Activated T-helper 1 cell treated with anti-CD3 and anti-CD28 coated beads, Interleukin-12 subunit alpha, Interleukin-12 subunit beta, Interleukin-2, Interleukin-4 antibody, amounts not matched to agents 30 ng/mL and 10 ng/mL and 1 ng/mL, durations not matched to agents 14 hours and 24 hours and 36 hours (primary cell): ENCODE measurements at regions of chr1 and their contacts with region 1.

Region 1: GRCh38 chr1:202810615-202811295 is at the start of gene PCAT6:
- DNase-seq: peak; percentile 88
- H3K4me3 Mint-ChIP-seq: peak within 1 kb of the TSS; percentile 96
- H3K27ac Mint-ChIP-seq: peak within 1 kb of the TSS; percentile 96
- H3K4me1 Mint-ChIP-seq: peaks cover 55% of the 10 kb centered on the region
- H3K27me3 Mint-ChIP-seq: peaks cover 9% of the 10 kb centered on the region
- total RNA-seq, gene PCAT6: 1.1 and 1.7 TPM in 2 replicates

Region 2: DNA sequence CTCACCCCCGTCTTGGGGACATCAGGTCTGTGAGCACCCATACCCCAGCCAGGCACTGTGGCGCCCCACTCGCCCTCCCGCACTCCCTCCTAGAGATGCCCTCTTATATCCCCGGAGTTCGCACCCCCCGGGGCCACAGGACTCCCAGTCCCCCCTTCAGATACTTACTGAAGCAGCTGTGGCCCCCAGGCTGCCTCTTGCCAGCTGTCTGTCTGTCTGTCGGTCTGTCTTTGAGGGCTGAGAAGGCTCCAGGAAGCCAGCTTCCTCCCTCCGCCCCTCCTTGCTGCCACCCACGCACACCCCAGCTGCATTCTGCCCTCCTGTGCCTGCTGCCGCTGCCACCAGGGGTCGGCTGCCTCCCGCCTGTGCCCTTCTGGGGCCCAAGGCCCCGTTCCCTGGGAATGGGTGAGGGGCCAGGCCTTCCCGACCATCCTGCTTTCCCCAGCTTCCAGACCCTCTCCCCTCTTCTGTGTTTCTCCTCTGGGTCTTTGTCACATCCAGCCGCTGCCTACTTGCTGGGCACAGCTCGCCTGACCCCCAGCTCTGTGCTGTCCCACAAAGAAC is 650.3 kb before region 1 on chr1 and contains the start of gene PTPN7:
- intact Hi-C with region 1: loop called (anchors 5 kb)
- DNase-seq: peak; percentile 59
- H3K4me3 Mint-ChIP-seq: peak within 1 kb of the TSS; percentile 98
- H3K27ac Mint-ChIP-seq: peak within 1 kb of the TSS; percentile 94
- H3K4me1 Mint-ChIP-seq: peaks cover 77% of the 10 kb centered on the region
- H3K27me3 Mint-ChIP-seq: no peaks in the 10 kb centered on the region
- total RNA-seq, gene PTPN7: 584 and 597 TPM in 2 replicates

Region 3: DNA sequence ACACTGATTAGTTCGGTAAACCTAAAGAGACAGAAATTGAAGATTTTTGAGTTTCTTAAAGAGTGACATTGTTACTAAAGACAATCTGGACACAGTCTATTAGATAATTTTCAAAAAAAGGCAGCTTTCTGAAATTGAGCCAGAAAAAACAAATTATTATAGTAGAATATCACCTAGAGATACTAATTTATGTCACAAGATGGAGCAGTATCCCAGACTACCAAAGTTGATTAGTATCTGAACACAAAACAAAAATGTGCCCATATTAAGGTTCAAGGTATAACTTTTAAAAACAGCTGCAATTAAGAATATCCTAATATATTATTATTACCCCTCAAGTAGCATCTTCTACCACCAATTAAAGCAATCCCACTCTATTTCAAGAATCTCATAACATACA is 60.0 kb before region 1 on chr1:
- intact Hi-C with region 1: no loop called
- DNase-seq: no peak
- H3K4me3 Mint-ChIP-seq: no peak overlapping the region
- H3K27ac Mint-ChIP-seq: no peak overlapping the region
- H3K4me1 Mint-ChIP-seq: no peaks in the 10 kb centered on the region
- H3K27me3 Mint-ChIP-seq: no peaks in the 10 kb centered on the region

Region 4: GRCh38 chr1:202835548-202836090 is 24.9 kb after region 1 on chr1:
- intact Hi-C with region 1: loop called (anchors 2 kb)
- DNase-seq: peak; percentile 53
- H3K4me3 Mint-ChIP-seq: peak overlapping the region; percentile 63
- H3K27ac Mint-ChIP-seq: peak overlapping the region; percentile 82
- H3K4me1 Mint-ChIP-seq: peaks cover 71% of the 10 kb centered on the region
- H3K27me3 Mint-ChIP-seq: no peaks in the 10 kb centered on the region

Region 5: GRCh38 chr1:202861420-202862200 is 50.9 kb after region 1 on chr1:
- intact Hi-C with region 1: loop called (anchors 1 kb)
- DNase-seq: peak; percentile 60
- H3K4me3 Mint-ChIP-seq: peak overlapping the region; percentile 87
- H3K27ac Mint-ChIP-seq: no peak overlapping the region
- H3K4me1 Mint-ChIP-seq: peaks cover 21% of the 10 kb centered on the region
- H3K27me3 Mint-ChIP-seq: peaks cover 65% of the 10 kb centered on the region

Region 6: GRCh38 chr1:202926720-202927491 is 116.2 kb after region 1 on chr1 and contains the start of gene KLHL12:
- intact Hi-C with region 1: loop called (anchors 1 kb)
- DNase-seq: peak; percentile 92
- H3K4me3 Mint-ChIP-seq: peak within 1 kb of the TSS; percentile 97
- H3K27ac Mint-ChIP-seq: peak within 1 kb of the TSS; percentile 95
- H3K4me1 Mint-ChIP-seq: peaks cover 34% of the 10 kb centered on the region
- H3K27me3 Mint-ChIP-seq: peaks cover 3% of the 10 kb centered on the region
- total RNA-seq, gene KLHL12: 24.9 and 25.5 TPM in 2 replicates

Region 7: GRCh38 chr1:203006948-203007871 is 196.5 kb after region 1 on chr1 and contains the start of gene TMEM183A:
- intact Hi-C with region 1: loop called (anchors 2 kb)
- DNase-seq: peak; percentile 95
- H3K4me3 Mint-ChIP-seq: peak within 1 kb of the TSS; percentile 89
- H3K27ac Mint-ChIP-seq: peak within 1 kb of the TSS; percentile 96
- H3K4me1 Mint-ChIP-seq: peaks cover 34% of the 10 kb centered on the region
- H3K27me3 Mint-ChIP-seq: no peaks in the 10 kb centered on the region
- total RNA-seq, gene TMEM183A: 69.9 and 83.6 TPM in 2 replicates

Region 8: DNA sequence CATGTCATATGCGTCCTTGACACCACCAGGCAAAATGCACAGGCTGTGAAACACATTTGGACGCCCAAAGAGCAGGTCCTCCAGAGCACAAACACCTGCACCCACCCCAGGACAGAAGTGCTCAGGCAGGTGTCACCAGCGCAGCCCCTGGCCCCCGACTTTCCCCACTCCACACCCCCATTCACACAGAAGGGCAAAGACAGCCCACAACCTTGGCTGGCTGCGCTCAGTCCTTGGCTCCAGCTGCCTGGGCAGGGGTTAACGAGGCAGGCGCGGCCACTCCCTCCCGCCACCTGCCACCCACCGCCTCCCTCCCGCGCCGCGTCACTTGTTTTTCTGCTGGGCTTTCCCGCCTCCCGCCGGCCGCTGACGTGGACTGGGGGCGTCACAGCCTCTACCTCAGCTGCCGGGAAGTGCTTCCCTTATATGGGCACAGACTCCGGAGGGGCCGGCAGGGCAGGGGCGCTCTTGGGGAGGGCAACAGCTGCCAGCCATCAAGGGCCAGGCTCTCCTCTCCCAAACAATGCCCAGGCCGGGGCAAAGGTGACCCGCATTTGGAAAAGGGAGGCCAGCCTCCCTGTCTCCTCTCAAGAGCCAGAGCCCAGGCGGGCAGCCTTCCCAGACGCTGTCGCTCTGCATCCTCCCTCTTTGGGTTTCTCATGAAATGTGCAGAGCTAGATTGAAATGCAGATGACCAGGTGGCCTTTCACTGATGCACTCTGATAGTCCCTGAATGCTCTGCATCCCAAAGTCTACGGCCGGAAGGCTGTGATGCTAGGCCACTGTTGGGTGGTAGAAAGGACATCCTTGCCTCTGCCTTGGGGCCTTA is 479.7 kb after region 1 on chr1:
- intact Hi-C with region 1: loop called (anchors 5 kb)
- DNase-seq: peak; percentile 96
- H3K4me3 Mint-ChIP-seq: peak overlapping the region; percentile 83
- H3K27ac Mint-ChIP-seq: peak overlapping the region; percentile 99
- H3K4me1 Mint-ChIP-seq: peaks cover 89% of the 10 kb centered on the region
- H3K27me3 Mint-ChIP-seq: no peaks in the 10 kb centered on the region

Region 9: GRCh38 chr1:203726417-203726867 is 915.7 kb after region 1 on chr1:
- intact Hi-C with region 1: no loop called
- DNase-seq: no peak
- H3K4me3 Mint-ChIP-seq: no peak overlapping the region
- H3K27ac Mint-ChIP-seq: peak overlapping the region; percentile 49
- H3K4me1 Mint-ChIP-seq: no peaks in the 10 kb centered on the region
- H3K27me3 Mint-ChIP-seq: no peaks in the 10 kb centered on the region